ENCODE measurements at regions of chr4 and their contacts with region 1.

Region 1: GRCh38 chr4:76235915-76236314 is 15.6 kb upstream of the FAM47E start:
- DNase-seq: no peak
- H3K4me3 ChIP-seq: no peak overlapping the region
- H3K27ac ChIP-seq: no peak overlapping the region
- H3K4me1 ChIP-seq: peaks cover 0 to 8% of the 10 kb centered on the region in 2 experiments; a peak in 2 of 4 replicates
- H3K27me3 ChIP-seq: no peaks in the 10 kb centered on the region
- CTCF ChIP-seq: no peak
- EP300 ChIP-seq: no peak
- RAD21 ChIP-seq: no peak

Region 2: DNA sequence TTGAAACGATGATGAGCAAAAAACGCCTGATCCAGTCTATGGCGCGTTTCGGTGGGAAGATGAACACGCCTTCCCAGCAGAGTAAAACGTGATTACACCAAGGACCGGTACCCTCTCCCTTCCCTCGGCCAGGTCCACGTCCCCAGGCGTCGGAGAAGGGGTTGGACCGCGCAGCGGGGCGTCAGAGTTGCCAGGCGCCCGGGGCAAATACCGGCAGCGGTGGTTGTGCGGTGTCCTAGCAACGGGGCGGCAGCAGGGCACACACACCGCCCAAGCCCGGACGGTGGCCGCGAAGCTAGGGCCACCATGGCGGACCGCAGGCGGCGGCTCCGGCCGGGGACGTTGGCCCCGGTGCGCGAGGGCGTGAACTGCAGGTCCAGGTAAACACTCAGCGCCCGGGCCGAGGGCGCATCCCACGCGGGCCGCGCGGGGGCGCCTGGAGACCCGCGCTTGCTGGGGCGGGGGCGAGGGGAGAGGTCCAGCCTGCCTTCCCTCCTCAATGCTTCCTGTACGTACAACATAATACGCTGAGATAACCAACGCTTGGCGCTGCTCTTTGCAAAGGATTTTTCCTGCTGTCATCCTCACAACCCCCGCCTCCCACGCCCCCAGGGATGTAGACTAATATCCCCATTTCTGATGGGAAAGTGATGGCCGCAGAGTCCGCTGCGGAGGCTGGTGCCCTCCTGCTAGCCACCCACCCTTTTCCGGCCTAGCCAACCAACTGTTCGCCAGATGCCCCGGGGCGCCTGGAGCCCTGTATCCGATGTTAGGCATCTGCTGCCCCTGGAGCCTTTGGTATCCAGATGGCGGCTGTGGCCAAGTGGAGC is 15.7 kb after region 1 on chr4 and contains the start of gene FAM47E:
- CTCF ChIA-PET with region 1: interaction called, 19 read pairs
- POLR2A ChIA-PET with region 1: no interaction called
- DNase-seq: peak; percentile 90
- H3K4me3 ChIP-seq: peak within 1 kb of the TSS; percentile 67 to 72
- H3K27ac ChIP-seq: peak within 1 kb of the TSS; percentile 52 to 81
- H3K4me1 ChIP-seq: peaks cover 0 to 9% of the 10 kb centered on the region in 2 experiments; a peak in 1 of 4 replicates
- H3K27me3 ChIP-seq: peaks cover 9% of the 10 kb centered on the region; the same call in 1 of the 2 replicates
- CTCF ChIP-seq: peak; percentile 59
- EP300 ChIP-seq: peak in 1 of 2 experiments; percentile 38; a peak in 1 of 4 replicates
- RAD21 ChIP-seq: peak; percentile 49
- polyA plus RNA-seq, gene FAM47E: 1.8 and 2.5 TPM in 2 replicates

Measured in SK-N-SH (cell line).